AG04449 (cell line): ENCODE measurements at regions of chr18 and their contacts with region 1.

Region 1: DNA sequence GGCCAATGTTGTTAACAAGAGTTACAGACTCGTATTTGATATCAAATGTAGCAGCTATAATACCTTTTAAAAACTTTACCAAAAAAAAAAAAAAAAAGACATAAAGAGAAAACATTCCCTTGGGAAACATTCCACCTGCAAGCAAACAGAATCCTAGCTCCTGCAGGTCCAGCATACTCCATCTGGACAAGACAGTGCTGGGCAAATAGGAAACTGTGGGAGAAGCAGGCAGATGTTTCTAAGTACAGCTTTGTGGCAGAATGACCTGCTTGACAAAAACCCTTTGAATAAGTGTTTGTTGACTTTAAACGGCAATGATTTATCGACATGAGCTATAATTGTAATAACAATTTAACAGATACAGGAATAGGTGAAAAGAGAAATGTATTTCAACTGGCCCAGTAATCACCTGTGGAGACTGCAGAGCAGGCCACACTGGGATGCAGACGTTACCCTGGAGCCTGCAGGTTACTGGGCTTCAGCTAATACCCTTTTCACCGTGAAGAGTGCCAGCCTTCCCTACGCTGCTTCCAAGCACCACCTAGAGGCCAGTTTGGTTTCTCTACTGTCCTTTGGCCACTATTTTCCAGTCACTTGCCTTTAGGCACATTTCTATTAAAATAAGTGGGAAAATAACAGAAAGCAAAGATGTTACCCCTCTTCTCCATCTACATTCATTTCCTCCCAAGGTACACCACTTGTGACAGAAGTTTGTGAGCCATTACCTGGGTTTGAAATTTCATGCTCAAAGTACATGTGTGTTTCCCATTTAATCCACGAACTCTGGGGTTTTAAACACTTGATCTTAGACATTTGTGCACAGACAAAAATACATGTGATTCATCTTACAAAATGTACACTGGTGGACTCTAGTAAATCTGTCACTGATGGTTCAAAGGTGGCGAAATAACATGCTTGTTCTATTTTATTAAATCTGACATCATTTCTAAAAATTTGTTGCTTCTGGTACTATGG is 96.9 kb upstream of the ZNF397 start:
- DNase-seq: no peak
- H3K4me3 ChIP-seq: no peak overlapping the region
- CTCF ChIP-seq: peak; percentile 79

Region 2: DNA sequence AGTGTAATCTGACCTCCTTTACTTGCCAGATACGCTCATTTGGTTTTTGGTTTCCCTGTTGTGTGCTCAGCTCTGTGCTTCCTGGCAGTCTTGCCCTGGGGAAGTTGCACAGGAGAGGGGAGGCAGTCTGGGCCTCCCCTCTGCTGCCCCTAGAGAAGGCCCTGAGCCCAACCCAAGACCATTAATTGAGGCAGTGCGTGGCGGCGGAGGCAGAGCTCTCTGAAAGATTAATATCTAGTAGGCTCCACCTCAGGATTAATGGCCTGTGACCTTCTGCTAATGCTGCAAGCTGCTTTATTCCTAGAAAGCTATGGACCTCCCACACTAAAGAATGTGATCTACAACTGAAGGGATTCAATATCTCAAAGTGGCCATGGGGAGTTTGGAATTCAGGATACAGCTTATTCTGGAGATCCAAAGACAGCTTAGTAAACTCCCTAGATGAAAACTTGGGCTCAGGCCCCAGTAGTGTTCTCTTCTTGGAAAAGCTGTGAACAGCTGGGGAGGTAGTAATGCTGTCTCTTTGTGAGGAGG is 144.1 kb before region 1 on chr18:
- CTCF ChIA-PET with region 1: interaction called, 51 read pairs
- POLR2A ChIA-PET with region 1: no interaction called
- DNase-seq: no peak
- H3K4me3 ChIP-seq: no peak overlapping the region
- CTCF ChIP-seq: no peak

Region 3: DNA sequence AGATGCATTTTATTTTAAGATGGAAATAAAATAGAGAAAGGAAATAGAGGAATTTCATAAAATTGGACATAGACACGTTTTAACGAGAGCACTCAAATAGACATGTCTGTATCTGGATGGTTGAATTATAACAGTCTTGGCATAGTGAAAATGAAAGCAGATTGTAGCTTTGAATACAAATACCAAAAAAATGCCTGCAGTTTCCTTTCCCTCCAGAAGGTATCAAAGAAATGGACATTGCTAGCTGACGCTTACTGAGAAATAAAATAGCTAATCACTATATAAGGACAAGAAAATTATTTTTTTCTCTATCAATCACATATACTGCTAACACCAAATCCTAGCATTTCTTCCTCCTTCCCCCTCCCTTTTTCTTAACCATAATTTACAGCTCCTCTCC is 114.1 kb before region 1 on chr18:
- CTCF ChIA-PET with region 1: interaction called, 26 read pairs
- POLR2A ChIA-PET with region 1: no interaction called
- DNase-seq: no peak
- H3K4me3 ChIP-seq: no peak overlapping the region
- CTCF ChIP-seq: no peak

Region 4: DNA sequence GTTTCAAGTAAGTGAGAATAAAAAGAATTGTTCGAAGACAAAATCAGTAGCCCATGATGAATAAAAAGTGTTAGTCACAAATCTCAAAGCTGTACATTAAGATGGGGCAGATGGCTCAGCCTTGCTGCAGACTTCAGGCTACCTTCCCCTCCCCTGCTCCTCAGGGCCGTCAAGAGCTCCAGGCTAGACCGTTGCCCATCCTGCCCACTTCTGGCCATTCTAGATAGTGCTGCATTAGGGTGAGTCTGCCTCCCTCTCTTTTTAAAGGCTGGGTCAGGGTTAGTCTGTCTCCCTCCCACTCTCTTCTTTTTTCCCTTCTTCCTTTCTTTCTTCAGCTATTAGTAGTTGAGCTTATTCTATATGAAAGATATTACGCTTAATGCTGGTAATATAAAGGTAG is 16.7 kb before region 1 on chr18:
- CTCF ChIA-PET with region 1: interaction called, 35 read pairs
- POLR2A ChIA-PET with region 1: no interaction called
- DNase-seq: no peak
- H3K4me3 ChIP-seq: no peak overlapping the region
- CTCF ChIP-seq: peak; percentile 39